PC-3 (cell line): ENCODE measurements at regions of chr19 and their contacts with region 1.

Region 1: GRCh38 chr19:48123907-48124651 is 13.5 kb upstream of the PLA2G4C start:
- DNase-seq: peak; percentile 84
- ATAC-seq: peak; percentile 86
- H3K4me3 ChIP-seq: no peak overlapping the region
- H3K27ac ChIP-seq: peak overlapping the region; percentile 37
- H3K4me1 ChIP-seq: peaks cover 26% of the 10 kb centered on the region
- H3K27me3 ChIP-seq: no peaks in the 10 kb centered on the region
- CTCF ChIP-seq: peak; percentile 44

Region 2: DNA sequence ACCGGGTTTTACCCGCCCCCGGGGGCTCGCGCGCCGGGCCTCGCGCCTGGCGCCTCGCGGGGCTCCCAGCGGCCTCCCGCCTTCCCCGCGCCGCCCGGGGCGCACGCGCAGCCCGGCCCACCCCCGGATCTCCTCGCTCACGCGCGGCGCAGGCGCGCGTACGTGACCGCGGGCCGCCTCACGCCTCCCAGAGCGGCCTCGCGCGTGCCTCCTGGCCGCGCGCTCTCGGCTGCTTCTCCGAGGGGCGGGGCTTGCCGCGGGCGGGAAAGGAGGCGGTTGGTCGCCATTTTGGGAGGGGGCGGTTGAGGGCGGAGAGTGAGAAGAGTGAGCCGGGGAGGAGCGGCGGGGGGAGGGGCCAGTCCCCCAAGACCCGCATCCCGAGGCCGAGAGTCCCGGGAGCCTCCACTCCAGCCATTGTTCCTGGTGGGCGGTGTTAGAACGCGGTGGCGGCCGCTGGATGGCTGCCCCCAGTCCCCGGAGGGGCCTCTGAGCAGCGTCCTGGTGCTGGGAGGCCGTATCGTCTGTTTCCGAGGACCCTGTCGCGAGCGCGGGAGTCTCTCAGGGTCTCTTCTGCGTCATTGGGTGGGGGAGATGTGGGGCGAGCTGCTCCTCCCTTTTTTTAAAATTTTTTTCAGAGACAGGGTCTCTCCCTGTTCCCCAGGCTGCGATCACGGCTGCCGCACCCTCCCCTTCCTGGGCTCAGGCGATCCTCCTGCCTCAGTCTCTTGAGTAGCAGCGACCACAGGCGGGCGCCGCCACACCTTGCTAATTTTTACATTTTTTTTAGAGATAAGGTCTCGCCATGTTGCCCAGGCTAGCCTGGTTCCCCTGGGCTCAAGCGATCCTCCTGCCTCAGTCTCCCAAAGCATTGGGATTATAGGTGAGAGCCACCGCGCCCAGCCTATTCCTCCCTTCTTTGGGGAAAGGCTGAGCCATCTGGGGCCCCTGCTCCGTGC is 550.7 kb before region 1 on chr19 and contains the start of gene ZNF541:
- CTCF ChIA-PET with region 1: no interaction called
- POLR2A ChIA-PET with region 1: no interaction called
- intact Hi-C with region 1: no loop called
- DNase-seq: no peak
- ATAC-seq: no peak
- H3K4me3 ChIP-seq: no peak within 1 kb of the TSS
- H3K27ac ChIP-seq: no peak within 1 kb of the TSS
- H3K4me1 ChIP-seq: no peaks in the 10 kb centered on the region
- H3K27me3 ChIP-seq: no peaks in the 10 kb centered on the region
- CTCF ChIP-seq: no peak
- total RNA-seq, gene ZNF541: not detected in 2 replicates

Region 3: DNA sequence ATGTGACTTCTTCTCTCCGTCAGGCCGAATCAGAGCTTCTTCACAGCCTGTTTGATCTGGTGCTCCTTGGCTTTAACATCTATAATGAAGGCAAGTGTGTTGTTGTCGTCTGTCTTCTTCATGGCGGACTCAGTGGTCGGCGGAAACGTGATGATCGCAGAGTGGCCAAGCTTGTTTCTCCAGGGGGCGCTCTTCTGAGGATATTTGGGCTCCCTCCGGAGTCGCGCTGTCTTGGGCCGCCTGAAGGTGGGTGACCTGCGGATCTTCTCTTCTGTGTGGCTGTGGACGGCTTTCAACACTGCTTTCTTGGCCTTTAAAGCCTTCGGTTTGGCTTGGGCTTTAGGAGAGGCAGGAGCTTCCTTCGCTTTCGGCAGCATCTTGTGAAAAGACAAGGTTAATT is 329.6 kb before region 1 on chr19:
- CTCF ChIA-PET with region 1: no interaction called
- POLR2A ChIA-PET with region 1: no interaction called
- intact Hi-C with region 1: no loop called
- DNase-seq: no peak
- ATAC-seq: no peak
- H3K4me3 ChIP-seq: no peak overlapping the region
- H3K27ac ChIP-seq: no peak overlapping the region
- H3K4me1 ChIP-seq: peaks cover 6% of the 10 kb centered on the region; the same call in 1 of the 2 replicates
- H3K27me3 ChIP-seq: no peaks in the 10 kb centered on the region
- CTCF ChIP-seq: peak; percentile 26; the same call in 1 of the 2 replicates

Region 4: GRCh38 chr19:48135411-48135810 is 11.3 kb after region 1 on chr19:
- CTCF ChIA-PET with region 1: interaction called, 11 read pairs
- POLR2A ChIA-PET with region 1: no interaction called
- intact Hi-C with region 1: no loop called
- DNase-seq: no peak
- ATAC-seq: no peak
- H3K4me3 ChIP-seq: no peak overlapping the region
- H3K27ac ChIP-seq: no peak overlapping the region
- H3K4me1 ChIP-seq: no peaks in the 10 kb centered on the region
- H3K27me3 ChIP-seq: no peaks in the 10 kb centered on the region
- CTCF ChIP-seq: no peak

Region 5: DNA sequence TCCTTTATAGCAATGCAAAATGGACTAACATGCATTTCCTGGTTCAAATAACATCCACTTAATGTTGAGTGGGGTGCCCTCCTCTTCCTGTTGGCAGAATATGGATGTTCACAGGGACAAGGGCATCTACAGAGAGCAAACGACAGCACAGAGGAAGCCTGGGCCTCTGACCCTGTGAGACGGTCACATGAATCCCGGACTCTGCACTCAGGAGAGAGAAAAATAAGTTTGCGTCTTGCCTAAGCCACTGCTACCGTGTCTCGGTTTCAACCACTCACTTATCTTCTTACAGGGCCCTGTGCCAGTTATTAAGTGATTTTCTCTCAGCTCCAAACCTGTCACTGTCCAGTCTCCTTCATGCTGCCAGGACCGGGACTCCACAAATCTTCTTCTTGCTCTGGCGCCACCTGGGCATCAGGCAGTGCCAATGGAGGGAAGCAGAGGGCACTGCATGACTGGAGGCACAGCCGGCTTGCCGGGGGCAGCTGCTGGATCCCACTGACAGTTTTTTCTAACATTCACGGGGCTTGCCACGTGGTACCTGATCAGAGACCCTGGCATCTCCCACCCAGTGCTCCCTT is 34.2 kb after region 1 on chr19:
- CTCF ChIA-PET with region 1: no interaction called
- POLR2A ChIA-PET with region 1: no interaction called
- intact Hi-C with region 1: no loop called
- DNase-seq: no peak
- ATAC-seq: no peak
- H3K4me3 ChIP-seq: no peak overlapping the region
- H3K27ac ChIP-seq: no peak overlapping the region
- H3K4me1 ChIP-seq: no peaks in the 10 kb centered on the region
- H3K27me3 ChIP-seq: no peaks in the 10 kb centered on the region
- CTCF ChIP-seq: 0 out of 2 replicates have a peak, but pooled peaks have one; percentile 23

Region 6: GRCh38 chr19:48308631-48309586 is 184.8 kb after region 1 on chr19:
- CTCF ChIA-PET with region 1: no interaction called
- POLR2A ChIA-PET with region 1: no interaction called
- intact Hi-C with region 1: no loop called
- DNase-seq: no peak
- ATAC-seq: no peak
- H3K4me3 ChIP-seq: no peak overlapping the region
- H3K27ac ChIP-seq: no peak overlapping the region
- H3K4me1 ChIP-seq: no peaks in the 10 kb centered on the region
- H3K27me3 ChIP-seq: no peaks in the 10 kb centered on the region
- CTCF ChIP-seq: peak; percentile 15; the same call in 1 of the 2 replicates